Natural killer cell (primary cell): ENCODE measurements at regions of chr12 and their contacts with region 1.

Region 1: DNA sequence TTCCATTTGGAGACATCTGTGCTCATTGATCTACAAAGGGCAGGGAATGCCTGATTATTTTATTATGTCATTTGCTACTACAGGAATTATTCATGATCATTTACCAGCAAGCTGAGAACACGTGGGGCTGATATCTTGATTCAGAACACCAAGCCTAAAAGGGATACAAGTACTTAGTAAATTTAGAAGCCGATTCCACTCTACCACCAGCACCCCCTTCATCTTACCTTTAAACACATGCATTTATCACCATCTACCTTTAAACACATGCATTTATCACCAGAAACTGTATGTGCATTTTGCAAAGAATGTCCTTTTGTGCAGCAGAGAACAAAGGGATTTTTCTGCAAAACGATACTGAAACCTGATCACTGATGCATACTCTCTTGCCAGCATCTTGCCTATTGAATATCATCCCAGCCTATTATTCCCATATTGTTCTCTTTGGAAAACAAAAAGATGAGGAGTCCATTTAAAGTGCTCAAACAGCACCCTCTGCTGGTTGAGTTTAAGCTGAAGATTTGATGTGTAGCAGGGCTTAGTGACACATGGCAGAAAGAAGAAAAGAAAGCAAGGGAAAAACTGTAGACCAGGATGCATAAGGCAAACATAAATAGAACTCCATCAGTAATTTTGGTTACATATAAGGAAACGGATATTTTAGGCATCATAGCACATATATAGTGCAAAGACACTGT is 132.6 kb upstream of the PLEKHG7 start:
- DNase-seq: peak in 1 of 2 donors; percentile 86
- ATAC-seq: peak; percentile 70 to 81 (median 80)
- H3K4me3 ChIP-seq: no peak overlapping the region
- H3K4me3 Mint-ChIP-seq: no peak overlapping the region
- H3K27ac ChIP-seq: peak overlapping the region; percentile 9
- H3K27ac Mint-ChIP-seq: no peak overlapping the region
- H3K4me1 ChIP-seq: no peaks in the 10 kb centered on the region
- H3K4me1 Mint-ChIP-seq: peaks cover 0 to 10% of the 10 kb centered on the region in 2 donors
- H3K27me3 ChIP-seq: no peaks in the 10 kb centered on the region
- H3K27me3 Mint-ChIP-seq: no peaks in the 10 kb centered on the region
- CTCF ChIP-seq: peak; percentile 88

Region 2: DNA sequence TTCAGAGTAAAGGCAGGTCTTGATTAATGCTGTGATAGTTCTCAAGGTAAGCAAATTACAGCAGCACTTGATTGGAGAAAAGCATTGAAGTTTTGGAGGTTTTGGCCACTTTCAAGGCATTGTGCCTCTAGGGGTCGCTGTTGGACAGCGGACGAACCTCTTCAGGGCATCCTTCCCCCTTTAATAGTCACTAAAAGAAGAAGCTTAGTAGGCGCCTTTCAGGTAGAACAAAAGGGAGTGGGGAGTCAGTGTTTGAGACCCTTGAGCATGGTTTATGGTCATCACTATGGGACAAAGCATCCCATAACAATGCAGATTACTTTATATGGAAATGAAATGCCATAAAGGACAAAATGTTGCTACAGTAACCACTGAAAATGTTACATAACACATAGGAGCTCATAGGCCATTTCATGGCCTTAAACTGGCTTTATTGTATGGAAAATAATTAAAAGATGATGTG is 1188.1 kb before region 1 on chr12:
- intact Hi-C with region 1: loop called (anchors 1 kb)
- DNase-seq: peak; percentile 75 to 92
- ATAC-seq: peak; percentile 79 to 88 (median 85)
- H3K4me3 ChIP-seq: no peak overlapping the region
- H3K4me3 Mint-ChIP-seq: no peak overlapping the region
- H3K27ac ChIP-seq: no peak overlapping the region
- H3K27ac Mint-ChIP-seq: peak overlapping the region in 1 of 2 donors; percentile 39
- H3K4me1 ChIP-seq: no peaks in the 10 kb centered on the region
- H3K4me1 Mint-ChIP-seq: peaks cover 9 to 10% of the 10 kb centered on the region in 2 donors
- H3K27me3 ChIP-seq: peaks cover 6% of the 10 kb centered on the region
- H3K27me3 Mint-ChIP-seq: peaks cover 24 to 34% of the 10 kb centered on the region in 2 donors
- CTCF ChIP-seq: peak; percentile 98

Region 3: DNA sequence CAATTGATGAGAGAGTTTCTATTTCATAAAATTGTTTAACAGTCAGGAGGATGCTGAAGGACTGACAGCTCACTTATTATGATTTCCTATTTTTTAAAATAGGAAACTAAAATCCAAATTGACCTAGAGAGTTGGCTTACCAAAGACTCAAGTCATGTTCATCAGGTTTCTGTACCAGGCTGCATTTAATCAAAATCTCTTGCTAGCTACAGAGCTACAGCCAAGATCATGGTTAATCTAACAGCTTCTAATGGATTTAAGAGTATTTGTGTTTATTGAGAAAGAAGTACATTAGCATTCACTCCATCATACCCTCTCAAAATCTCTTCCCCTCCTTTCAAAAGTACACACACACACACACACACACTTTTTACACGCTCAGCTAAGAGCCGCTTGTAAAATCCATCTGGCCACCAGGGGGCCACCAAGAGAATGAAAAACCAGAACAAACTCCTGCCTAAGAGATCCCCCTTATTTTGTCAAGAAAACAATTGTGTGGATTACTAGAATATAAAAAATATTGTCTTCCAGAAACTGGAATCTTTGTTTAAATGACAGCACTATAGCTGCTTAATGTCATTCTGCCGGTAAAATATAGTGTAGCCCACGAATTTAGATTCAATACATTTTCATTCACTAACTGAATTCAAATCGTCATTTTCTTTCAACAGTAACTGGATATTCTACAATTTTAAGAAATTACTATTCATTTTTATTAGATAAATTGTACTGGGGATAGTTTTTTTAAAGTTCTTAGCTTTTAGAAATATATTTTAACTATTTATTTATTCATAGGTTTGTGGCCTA is 758.5 kb before region 1 on chr12:
- intact Hi-C with region 1: loop called (anchors 5 kb)
- DNase-seq: peak; percentile 67 to 87
- ATAC-seq: peak; percentile 81 to 88 (median 87)
- H3K4me3 ChIP-seq: no peak overlapping the region
- H3K4me3 Mint-ChIP-seq: no peak overlapping the region
- H3K27ac ChIP-seq: no peak overlapping the region
- H3K27ac Mint-ChIP-seq: peak overlapping the region; percentile 76 to 78
- H3K4me1 ChIP-seq: no peaks in the 10 kb centered on the region
- H3K4me1 Mint-ChIP-seq: peaks cover 6 to 10% of the 10 kb centered on the region in 2 donors
- H3K27me3 ChIP-seq: no peaks in the 10 kb centered on the region
- H3K27me3 Mint-ChIP-seq: no peaks in the 10 kb centered on the region
- CTCF ChIP-seq: peak; percentile 95

Region 4: GRCh38 chr12:92408072-92408900 is 161.9 kb before region 1 on chr12:
- intact Hi-C with region 1: loop called (anchors 10 kb)
- DNase-seq: peak; percentile 30 to 75
- ATAC-seq: peak; percentile 51 to 65 (median 51)
- H3K4me3 ChIP-seq: no peak overlapping the region
- H3K4me3 Mint-ChIP-seq: no peak overlapping the region
- H3K27ac ChIP-seq: peak overlapping the region; percentile 3
- H3K27ac Mint-ChIP-seq: peak overlapping the region in 1 of 2 donors; percentile 54
- H3K4me1 ChIP-seq: peaks cover 27% of the 10 kb centered on the region
- H3K4me1 Mint-ChIP-seq: peaks cover 44 to 45% of the 10 kb centered on the region in 2 donors
- H3K27me3 ChIP-seq: no peaks in the 10 kb centered on the region
- H3K27me3 Mint-ChIP-seq: no peaks in the 10 kb centered on the region
- CTCF ChIP-seq: peak; percentile 66

Region 5: GRCh38 chr12:92539113-92539749 is 31.0 kb before region 1 on chr12:
- intact Hi-C with region 1: loop called (anchors 5 kb)
- DNase-seq: peak in 1 of 2 donors; percentile 54
- ATAC-seq: peak; percentile 56 to 70 (median 66)
- H3K4me3 ChIP-seq: no peak overlapping the region
- H3K4me3 Mint-ChIP-seq: peak overlapping the region; percentile 81
- H3K27ac ChIP-seq: peak overlapping the region; percentile 92
- H3K27ac Mint-ChIP-seq: peak overlapping the region; percentile 97 to 99
- H3K4me1 ChIP-seq: peaks cover 56% of the 10 kb centered on the region
- H3K4me1 Mint-ChIP-seq: peaks cover 73 to 75% of the 10 kb centered on the region in 2 donors
- H3K27me3 ChIP-seq: no peaks in the 10 kb centered on the region
- H3K27me3 Mint-ChIP-seq: no peaks in the 10 kb centered on the region
- CTCF ChIP-seq: no peak

Region 6: DNA sequence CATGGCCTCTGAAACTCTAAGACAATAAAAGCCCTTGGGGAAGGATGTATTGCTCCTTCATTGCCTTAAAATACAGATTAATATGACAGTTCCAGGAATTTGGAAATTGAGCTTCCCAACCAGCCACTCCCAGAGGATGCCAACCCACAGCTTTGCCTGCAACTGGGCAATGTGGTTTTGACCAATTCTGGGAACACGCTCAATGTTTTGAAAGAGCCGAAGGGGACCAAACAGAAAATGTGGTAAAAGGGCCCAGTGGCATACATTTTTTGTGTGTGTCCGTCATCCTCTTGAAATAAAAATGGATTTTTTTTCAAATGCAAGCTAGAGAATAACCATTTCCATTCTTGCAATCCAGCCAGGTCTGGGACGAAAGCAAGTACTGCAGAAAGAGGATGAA is 44.3 kb after region 1 on chr12:
- intact Hi-C with region 1: no loop called
- DNase-seq: no peak
- ATAC-seq: no peak
- H3K4me3 ChIP-seq: no peak overlapping the region
- H3K4me3 Mint-ChIP-seq: no peak overlapping the region
- H3K27ac ChIP-seq: no peak overlapping the region
- H3K27ac Mint-ChIP-seq: no peak overlapping the region
- H3K4me1 ChIP-seq: no peaks in the 10 kb centered on the region
- H3K4me1 Mint-ChIP-seq: no peaks in the 10 kb centered on the region
- H3K27me3 ChIP-seq: no peaks in the 10 kb centered on the region
- H3K27me3 Mint-ChIP-seq: no peaks in the 10 kb centered on the region
- CTCF ChIP-seq: no peak

Region 7: GRCh38 chr12:92649511-92650227 is 79.5 kb after region 1 on chr12:
- intact Hi-C with region 1: loop called (anchors 1 kb)
- DNase-seq: peak; percentile 41 to 87
- ATAC-seq: peak; percentile 89 to 97 (median 96)
- H3K4me3 ChIP-seq: no peak overlapping the region
- H3K4me3 Mint-ChIP-seq: no peak overlapping the region
- H3K27ac ChIP-seq: no peak overlapping the region
- H3K27ac Mint-ChIP-seq: peak overlapping the region; percentile 4 to 65
- H3K4me1 ChIP-seq: no peaks in the 10 kb centered on the region
- H3K4me1 Mint-ChIP-seq: peaks cover 9% of the 10 kb centered on the region in 2 donors
- H3K27me3 ChIP-seq: no peaks in the 10 kb centered on the region
- H3K27me3 Mint-ChIP-seq: peaks cover 3 to 9% of the 10 kb centered on the region in 2 donors
- CTCF ChIP-seq: peak; percentile 74